HCT116 (cell line): ENCODE measurements at regions of chr17 and their contacts with region 1.

Region 1: GRCh38 chr17:65794572-65794971 is 233.1 kb upstream of the AXIN2 start:
- DNase-seq: peak; percentile 48
- ATAC-seq: peak; percentile 84
- H3K4me3 ChIP-seq: no peak overlapping the region
- H3K27ac ChIP-seq: no peak overlapping the region
- H3K4me1 ChIP-seq: 0 out of 4 replicates have a peak, but pooled peaks cover 0 to 3% of the 10 kb centered on the region in 2 experiments
- H3K27me3 ChIP-seq: no peaks in the 10 kb centered on the region
- CTCF ChIP-seq: peak; percentile 54 to 82 (median 75); a peak in 5 of 6 replicates
- POLR2A ChIP-seq: no peak
- RAD21 ChIP-seq: peak; percentile 74

Region 2: DNA sequence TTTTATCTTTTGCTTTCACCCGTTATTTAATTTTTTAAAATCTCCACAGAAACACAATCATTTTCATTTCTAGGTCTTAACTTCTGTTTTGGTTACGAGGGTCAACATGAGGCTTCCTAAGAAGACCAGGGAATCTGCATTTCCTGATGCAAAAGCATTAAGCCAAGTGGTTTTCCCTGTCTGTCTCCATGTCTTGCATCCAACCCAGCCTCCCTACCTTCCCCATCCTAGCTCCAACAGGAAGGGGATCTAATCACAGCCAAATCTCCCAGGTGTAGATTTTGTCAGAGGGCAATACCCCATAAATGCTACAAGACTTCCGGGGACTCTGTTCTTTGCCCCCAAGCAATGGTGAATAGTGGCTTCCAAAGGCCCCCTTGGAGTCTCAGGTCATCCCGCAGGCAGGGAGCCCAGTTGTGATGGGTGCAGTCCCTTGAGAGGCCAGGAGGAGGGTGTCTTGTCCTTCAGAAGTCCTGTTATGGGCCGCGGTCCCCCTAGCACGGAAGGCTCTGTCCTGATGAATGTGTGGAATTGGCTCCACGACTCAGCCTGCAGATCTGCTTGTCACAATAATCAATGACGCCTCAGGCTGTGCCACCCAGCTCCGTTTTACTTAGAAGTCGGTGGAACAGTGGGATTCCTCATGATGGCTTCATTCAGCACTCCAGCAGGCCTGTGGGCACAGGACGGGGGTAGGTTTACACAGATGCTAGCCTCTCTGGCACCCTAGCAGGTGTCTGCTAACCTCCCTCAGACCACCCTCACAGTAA is 516.3 kb before region 1 on chr17:
- CTCF ChIA-PET with region 1: interaction called, 3 read pairs
- POLR2A ChIA-PET with region 1: no interaction called
- RAD21 ChIA-PET with region 1: no interaction called
- intact Hi-C with region 1: loop called (anchors 5 kb)
- DNase-seq: peak; percentile 57
- ATAC-seq: peak; percentile 99
- H3K4me3 ChIP-seq: no peak overlapping the region
- H3K27ac ChIP-seq: no peak overlapping the region
- H3K4me1 ChIP-seq: no peaks in the 10 kb centered on the region; a peak in 1 of 4 replicates
- H3K27me3 ChIP-seq: no peaks in the 10 kb centered on the region
- CTCF ChIP-seq: peak; percentile 59 to 94 (median 91); a peak in 5 of 6 replicates
- POLR2A ChIP-seq: no peak
- RAD21 ChIP-seq: peak; percentile 90

Region 3: GRCh38 chr17:65294179-65294720 is 500.3 kb before region 1 on chr17:
- CTCF ChIA-PET with region 1: interaction called, 14 read pairs
- POLR2A ChIA-PET with region 1: no interaction called
- RAD21 ChIA-PET with region 1: no interaction called
- intact Hi-C with region 1: loop called (anchors 2 kb)
- DNase-seq: peak; percentile 72
- ATAC-seq: peak; percentile 100
- H3K4me3 ChIP-seq: no peak overlapping the region
- H3K27ac ChIP-seq: no peak overlapping the region
- H3K4me1 ChIP-seq: peaks cover 4 to 16% of the 10 kb centered on the region in 2 experiments; a peak in 3 of 4 replicates
- H3K27me3 ChIP-seq: no peaks in the 10 kb centered on the region
- CTCF ChIP-seq: peak; percentile 88 to 97 (median 96)
- POLR2A ChIP-seq: no peak
- RAD21 ChIP-seq: peak; percentile 98